Colonic mucosa (tissue), 4 donors: ENCODE measurements at regions of chr22 and their contacts with region 1.

Region 1: GRCh38 chr22:36286471-36287224 is 33.7 kb downstream of the APOL1 start:
- DNase-seq: peak; percentile 76
- H3K4me3 ChIP-seq: no peak overlapping the region
- H3K27ac ChIP-seq: no peak overlapping the region
- H3K4me1 ChIP-seq: no peaks in the 10 kb centered on the region
- H3K27me3 ChIP-seq: no peaks in the 10 kb centered on the region
- CTCF ChIP-seq: peak; percentile 66

Region 2: DNA sequence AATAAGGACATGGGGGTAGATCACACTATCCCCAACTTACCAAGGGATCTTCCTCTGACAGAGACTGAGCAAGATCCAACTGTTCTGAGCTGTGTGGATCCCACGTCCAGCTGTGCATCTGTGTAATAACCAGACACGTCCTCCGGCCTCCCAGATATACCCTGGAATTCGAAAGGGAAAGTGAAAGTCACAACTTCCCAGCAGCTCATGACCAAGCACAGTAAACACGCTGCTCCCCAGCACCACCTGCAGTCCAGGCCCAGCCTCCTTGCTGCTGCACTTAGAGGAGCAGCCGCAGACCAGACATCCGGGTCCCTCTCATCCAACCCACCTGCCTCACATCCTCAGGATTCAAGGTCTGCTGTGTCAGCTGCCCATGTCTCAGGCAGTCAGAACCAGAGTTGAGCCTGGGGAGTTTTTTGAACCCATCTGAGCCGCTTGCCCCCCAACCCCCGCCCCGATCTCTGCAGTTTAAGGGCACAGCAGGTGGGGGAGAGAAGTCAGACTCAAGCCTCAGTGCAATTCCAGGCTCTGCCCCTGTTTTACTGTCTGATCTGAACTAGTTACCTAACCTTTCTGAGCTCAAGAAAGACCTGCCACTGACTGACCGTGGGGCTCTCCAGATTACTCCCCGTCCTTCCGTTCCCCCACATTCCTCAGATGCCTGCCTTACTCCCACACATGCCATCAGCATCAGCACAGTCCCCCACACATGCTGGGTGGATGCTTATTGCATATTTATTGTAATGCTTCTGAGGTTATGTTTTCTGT is 47.1 kb before region 1 on chr22 and contains the start of gene APOL2:
- intact Hi-C with region 1: loop called (anchors 5 kb)
- DNase-seq: peak; percentile 93
- H3K4me3 ChIP-seq: peak within 1 kb of the TSS; percentile 61
- H3K27ac ChIP-seq: peak within 1 kb of the TSS; percentile 93
- H3K4me1 ChIP-seq: peaks cover 18% of the 10 kb centered on the region
- H3K27me3 ChIP-seq: no peaks in the 10 kb centered on the region
- CTCF ChIP-seq: peak; percentile 69
- total RNA-seq, gene APOL2: 27.5 to 29.4 TPM